OCI-LY7 (cell line): ENCODE measurements at regions of chr7 and their contacts with region 1.

Region 1: GRCh38 chr7:77351539-77352004 is 64.6 kb downstream of the GSAP start:
- DNase-seq: peak; percentile 59
- H3K4me3 ChIP-seq: peak overlapping the region; percentile 16
- H3K27ac ChIP-seq: no peak overlapping the region
- H3K4me1 ChIP-seq: peaks cover 12% of the 10 kb centered on the region
- CTCF ChIP-seq: no peak

Region 2: GRCh38 chr7:77536413-77537135 is 185.0 kb after region 1 on chr7:
- CTCF ChIA-PET with region 1: no interaction called
- POLR2A ChIA-PET with region 1: no interaction called
- intact Hi-C with region 1: loop called (anchors 5 kb)
- DNase-seq: peak; percentile 96
- H3K4me3 ChIP-seq: peak overlapping the region; percentile 97
- H3K27ac ChIP-seq: peak overlapping the region; percentile 50
- H3K4me1 ChIP-seq: peaks cover 11% of the 10 kb centered on the region
- CTCF ChIP-seq: no peak